GM12878 (cell line): ENCODE measurements at regions of chr4 and their contacts with region 1.

Region 1: DNA sequence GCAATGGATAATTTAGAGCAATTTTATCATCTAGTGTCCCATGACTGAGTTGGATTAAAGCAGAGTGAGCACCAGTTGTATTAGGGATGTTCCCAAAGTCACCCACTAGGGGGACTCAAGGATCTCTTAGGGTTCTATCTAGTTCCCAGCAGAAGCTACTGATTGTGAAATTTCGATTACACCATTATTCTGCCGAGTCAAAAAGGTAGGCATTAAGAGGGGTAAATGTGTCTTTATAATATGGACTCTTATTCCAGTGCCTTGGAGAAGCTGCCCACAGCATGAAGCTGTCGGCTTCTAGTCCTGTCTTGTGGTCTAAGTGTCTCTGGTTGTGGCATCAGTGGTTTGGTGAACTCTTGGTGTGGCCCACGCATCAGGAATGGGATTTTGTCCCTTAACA is 53.3 kb downstream of the RGS12 start:
- DNase-seq: peak; percentile 30
- ATAC-seq: peak; percentile 100
- H3K4me3 ChIP-seq: no peak overlapping the region
- H3K27ac ChIP-seq: no peak overlapping the region
- H3K4me1 ChIP-seq: no peaks in the 10 kb centered on the region
- H3K27me3 ChIP-seq: no peaks in the 10 kb centered on the region
- CTCF ChIP-seq: peak; percentile 78 to 85 (median 79)
- EP300 ChIP-seq: no peak
- POLR2A ChIP-seq: no peak
- RAD21 ChIP-seq: peak; percentile 99

Region 2: DNA sequence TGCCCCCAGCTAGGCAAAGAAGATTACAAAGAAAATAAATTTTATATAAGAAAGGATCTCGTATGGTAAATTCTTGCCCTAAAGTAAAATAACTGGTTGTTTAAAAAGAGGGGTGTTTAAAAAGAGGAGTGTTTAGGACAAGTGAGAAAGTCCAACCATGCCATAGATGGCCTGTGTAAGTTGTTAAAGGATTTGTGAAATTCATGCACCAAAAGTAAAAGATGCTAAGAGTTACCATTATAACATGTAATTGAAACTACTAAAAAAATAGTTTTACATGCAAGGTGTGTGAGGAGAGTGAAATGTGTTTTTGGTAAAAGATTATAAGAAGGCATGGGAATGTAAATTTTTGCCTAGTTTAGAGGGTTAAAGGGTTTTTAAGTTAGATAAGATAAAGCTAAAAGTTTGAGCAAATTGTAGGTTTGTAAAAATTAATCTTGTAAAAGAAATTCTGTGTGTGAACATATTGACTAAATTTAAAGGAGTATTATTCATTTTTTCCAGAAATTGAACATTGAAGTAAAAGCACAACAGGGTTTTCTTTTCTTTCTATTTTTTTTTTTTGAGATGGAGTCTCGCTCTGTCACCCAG is 291.9 kb before region 1 on chr4:
- CTCF ChIA-PET with region 1: no interaction called
- POLR2A ChIA-PET with region 1: no interaction called
- RAD21 ChIA-PET with region 1: no interaction called
- SMC1A ChIA-PET with region 1: no interaction called
- in situ Hi-C with region 1: no loop called
- intact Hi-C with region 1: no loop called
- DNase-seq: no peak
- ATAC-seq: no peak
- H3K4me3 ChIP-seq: no peak overlapping the region
- H3K27ac ChIP-seq: no peak overlapping the region
- H3K4me1 ChIP-seq: peaks cover 10% of the 10 kb centered on the region
- H3K27me3 ChIP-seq: no peaks in the 10 kb centered on the region
- CTCF ChIP-seq: no peak
- EP300 ChIP-seq: no peak
- POLR2A ChIP-seq: no peak
- RAD21 ChIP-seq: no peak

Region 3: DNA sequence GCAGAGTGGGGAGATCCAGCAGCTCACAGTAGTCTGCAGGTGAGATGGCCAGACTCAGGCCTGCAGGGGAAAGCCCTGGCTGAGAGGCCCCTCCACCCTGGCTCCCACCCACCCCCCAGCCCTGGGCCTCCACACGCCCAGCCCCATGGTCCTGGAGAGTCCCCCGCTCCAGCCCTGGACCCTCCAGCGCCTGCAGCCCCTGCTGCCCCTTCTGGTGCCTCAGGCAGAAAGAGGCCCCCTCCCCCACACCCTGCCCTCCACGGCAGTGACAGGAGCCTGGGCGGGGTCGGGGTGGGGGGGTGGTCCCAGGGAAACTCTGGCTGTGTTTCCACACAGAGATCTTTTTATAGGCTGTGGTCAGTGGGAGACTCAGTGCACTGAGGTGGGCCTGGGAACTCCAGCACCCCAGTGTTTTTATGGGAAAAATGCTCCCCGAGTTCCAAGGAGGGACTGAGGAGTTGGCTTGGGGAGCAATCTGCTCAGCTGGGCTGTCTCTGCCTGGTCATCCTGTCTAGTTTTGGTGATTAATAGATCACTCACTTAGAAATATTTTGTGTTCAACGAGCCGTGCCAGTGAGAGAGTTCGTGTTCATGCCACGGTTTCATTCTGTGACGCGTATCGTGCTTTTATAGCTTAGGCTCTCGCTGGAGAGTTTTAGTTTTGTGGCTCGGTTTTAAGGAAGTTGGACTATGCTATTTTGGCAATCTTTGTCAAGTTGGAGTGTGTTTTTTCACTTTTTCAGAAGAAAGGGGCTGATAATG is 42.5 kb after region 1 on chr4:
- CTCF ChIA-PET with region 1: interaction called, 14 read pairs
- POLR2A ChIA-PET with region 1: no interaction called
- RAD21 ChIA-PET with region 1: interaction called, 8 read pairs
- SMC1A ChIA-PET with region 1: interaction called, 15 read pairs
- in situ Hi-C with region 1: no loop called
- intact Hi-C with region 1: loop called (anchors 2 kb)
- DNase-seq: peak; percentile 77
- ATAC-seq: peak; percentile 88
- H3K4me3 ChIP-seq: peak overlapping the region; percentile 77
- H3K27ac ChIP-seq: peak overlapping the region; percentile 91
- H3K4me1 ChIP-seq: peaks cover 21% of the 10 kb centered on the region
- H3K27me3 ChIP-seq: no peaks in the 10 kb centered on the region
- CTCF ChIP-seq: no peak
- EP300 ChIP-seq: peak in 1 of 2 experiments; percentile 59; a peak in 2 of 4 replicates
- POLR2A ChIP-seq: no peak
- RAD21 ChIP-seq: no peak

Region 4: DNA sequence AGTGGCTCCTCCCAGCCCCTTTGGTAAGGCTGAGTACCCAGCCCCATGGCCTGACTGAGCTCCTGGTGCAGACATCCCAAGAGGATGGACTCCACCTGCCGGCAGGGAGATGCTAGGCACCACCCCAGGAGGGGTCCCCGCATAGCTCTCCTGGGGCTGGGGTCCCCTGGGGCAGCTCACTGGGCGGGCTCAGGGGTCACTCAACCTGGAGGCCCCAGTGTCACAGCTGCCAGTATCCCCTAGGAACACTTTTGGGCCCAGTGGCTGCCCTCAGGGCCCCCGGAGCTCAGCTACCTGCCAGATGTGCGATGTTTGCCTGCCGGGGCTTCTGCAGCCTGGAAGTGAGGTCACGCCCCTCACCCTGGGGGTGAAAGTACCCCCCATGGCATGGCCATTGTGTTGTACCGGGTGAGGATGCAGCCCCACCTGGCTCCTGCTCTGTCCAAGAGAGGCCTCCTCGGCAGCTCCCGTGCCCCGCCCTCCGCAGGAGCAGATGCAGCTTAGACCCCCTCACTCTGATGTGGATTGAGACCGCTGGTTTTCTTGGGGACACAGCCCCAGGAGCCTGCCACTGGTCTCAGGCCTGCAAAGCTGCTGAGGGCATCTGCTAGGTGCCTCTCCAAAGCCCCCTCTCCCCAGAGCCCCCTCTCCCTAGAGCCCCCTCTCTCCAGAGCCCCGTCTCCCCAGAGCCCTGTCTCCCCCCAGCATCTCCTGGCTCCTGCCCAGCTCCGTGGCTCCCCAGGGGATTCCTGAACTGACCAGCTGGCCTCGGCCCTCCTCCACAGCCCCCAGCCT is 88.9 kb after region 1 on chr4:
- CTCF ChIA-PET with region 1: interaction called, 81 read pairs
- POLR2A ChIA-PET with region 1: interaction called, 3 read pairs
- RAD21 ChIA-PET with region 1: interaction called, 10 read pairs
- SMC1A ChIA-PET with region 1: interaction called, 35 read pairs
- in situ Hi-C with region 1: no loop called
- intact Hi-C with region 1: no loop called
- DNase-seq: no peak
- ATAC-seq: no peak
- H3K4me3 ChIP-seq: no peak overlapping the region
- H3K27ac ChIP-seq: no peak overlapping the region
- H3K4me1 ChIP-seq: no peaks in the 10 kb centered on the region
- H3K27me3 ChIP-seq: no peaks in the 10 kb centered on the region
- CTCF ChIP-seq: peak in 2 of 3 experiments; percentile 3 to 13; a peak in 1 of 6 replicates
- EP300 ChIP-seq: no peak
- POLR2A ChIP-seq: no peak
- RAD21 ChIP-seq: no peak; the same call in 1 of the 2 replicates

Region 5: DNA sequence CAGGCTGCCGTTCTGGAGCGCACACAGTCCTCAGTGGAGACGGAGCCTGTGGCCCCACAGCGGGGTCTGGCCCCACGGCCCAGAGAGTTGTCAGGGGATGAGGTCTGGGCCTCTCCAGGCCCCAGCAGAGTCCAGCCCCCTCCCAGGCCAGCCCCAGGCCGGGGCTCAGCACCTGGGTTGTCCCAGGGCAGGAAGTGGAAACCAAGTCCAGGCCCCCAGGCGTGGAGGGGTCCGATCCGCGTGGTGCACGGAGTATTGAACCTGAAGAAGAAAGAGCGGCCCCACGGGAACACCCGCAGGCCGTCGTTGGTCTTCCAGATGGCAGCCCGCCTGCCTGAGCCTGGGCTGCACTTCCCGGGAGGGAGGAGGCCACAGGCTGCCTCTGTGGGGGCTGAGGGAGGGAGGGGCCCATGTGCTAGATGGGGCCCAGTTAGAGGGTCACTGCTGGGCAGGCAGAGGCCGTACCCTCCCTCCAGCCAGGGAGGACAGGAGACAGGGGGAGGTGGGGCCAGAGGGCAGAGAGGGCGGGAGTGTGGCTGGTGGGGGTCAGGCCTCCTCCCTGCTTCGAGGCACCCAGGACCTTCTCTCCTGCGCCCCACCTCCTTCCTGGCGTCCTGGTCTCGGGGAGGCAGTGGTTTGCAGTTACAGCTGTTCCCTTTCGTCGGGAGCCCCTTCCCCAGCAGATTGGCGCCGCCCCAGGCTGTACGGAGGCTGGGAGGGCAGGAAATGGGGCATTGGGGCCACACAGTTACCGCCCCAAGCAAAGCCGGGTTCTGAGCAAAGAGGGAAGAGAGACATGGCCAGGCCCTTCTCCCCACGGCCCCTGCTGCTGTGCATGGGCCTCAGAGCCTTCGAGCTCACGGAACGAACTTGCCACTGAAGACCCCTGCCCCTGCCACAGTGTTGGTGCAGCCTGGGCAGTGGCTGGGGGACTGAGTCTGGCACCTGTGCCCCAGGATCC is 103.7 kb after region 1 on chr4:
- CTCF ChIA-PET with region 1: interaction called, 81 read pairs
- POLR2A ChIA-PET with region 1: no interaction called
- RAD21 ChIA-PET with region 1: interaction called, 4 read pairs
- SMC1A ChIA-PET with region 1: interaction called, 35 read pairs
- in situ Hi-C with region 1: loop called (anchors 5 kb)
- intact Hi-C with region 1: no loop called
- DNase-seq: no peak
- ATAC-seq: no peak
- H3K4me3 ChIP-seq: no peak overlapping the region
- H3K27ac ChIP-seq: no peak overlapping the region
- H3K4me1 ChIP-seq: no peaks in the 10 kb centered on the region
- H3K27me3 ChIP-seq: no peaks in the 10 kb centered on the region
- CTCF ChIP-seq: no peak
- EP300 ChIP-seq: no peak
- POLR2A ChIP-seq: no peak
- RAD21 ChIP-seq: no peak